Naive thymus-derived CD4-positive, alpha-beta T cell (primary cell): ENCODE measurements at regions of chrX and their contacts with region 1.

Region 1: GRCh38 chrX:40468033-40468846 is 112.5 kb upstream of the ATP6AP2 start:
- DNase-seq: peak in 5 of 9 donors; percentile 22 to 40 (median 31)
- ATAC-seq: peak; percentile 72
- H3K4me3 ChIP-seq: no peak overlapping the region
- H3K4me3 Mint-ChIP-seq: peak overlapping the region in 6 of 10 donors; percentile 8 to 73 (median 38)
- H3K27ac ChIP-seq: no peak overlapping the region
- H3K27ac Mint-ChIP-seq: peak overlapping the region in 2 of 9 donors; percentile 14 to 69
- H3K4me1 ChIP-seq: peaks cover 0 to 13% of the 10 kb centered on the region in 2 donors
- H3K4me1 Mint-ChIP-seq: peaks cover 14 to 40% (median 33%) of the 10 kb centered on the region in 7 donors
- H3K27me3 ChIP-seq: no peaks in the 10 kb centered on the region
- H3K27me3 Mint-ChIP-seq: no peaks in the 10 kb centered on the region

Region 2: GRCh38 chrX:40006106-40007017 is 461.9 kb before region 1 on chrX:
- CTCF ChIA-PET with region 1: no interaction called
- POLR2A ChIA-PET with region 1: no interaction called
- intact Hi-C with region 1: loop called in 1 of 2 experiments (anchors 1 kb)
- DNase-seq: peak in 3 of 9 donors; percentile 13 to 53 (median 23)
- ATAC-seq: peak; percentile 49
- H3K4me3 ChIP-seq: peak overlapping the region; percentile 24
- H3K4me3 Mint-ChIP-seq: peak overlapping the region; percentile 42 to 90 (median 60)
- H3K27ac ChIP-seq: no peak overlapping the region
- H3K27ac Mint-ChIP-seq: no peak overlapping the region
- H3K4me1 ChIP-seq: peaks cover 0 to 14% of the 10 kb centered on the region in 2 donors
- H3K4me1 Mint-ChIP-seq: peaks cover 5 to 35% (median 27%) of the 10 kb centered on the region in 7 donors
- H3K27me3 ChIP-seq: no peaks in the 10 kb centered on the region
- H3K27me3 Mint-ChIP-seq: peaks cover 15 to 51% (median 18%) of the 10 kb centered on the region in 5 donors

Region 3: GRCh38 chrX:40446921-40447320 is 21.3 kb before region 1 on chrX:
- CTCF ChIA-PET with region 1: no interaction called
- POLR2A ChIA-PET with region 1: no interaction called
- intact Hi-C with region 1: loop called in 1 of 2 experiments (anchors 1 kb)
- DNase-seq: no peak
- ATAC-seq: no peak
- H3K4me3 ChIP-seq: no peak overlapping the region
- H3K4me3 Mint-ChIP-seq: no peak overlapping the region
- H3K27ac ChIP-seq: no peak overlapping the region
- H3K27ac Mint-ChIP-seq: no peak overlapping the region
- H3K4me1 ChIP-seq: no peaks in the 10 kb centered on the region
- H3K4me1 Mint-ChIP-seq: peaks cover 0 to 2% (median 0%) of the 10 kb centered on the region in 7 donors
- H3K27me3 ChIP-seq: no peaks in the 10 kb centered on the region
- H3K27me3 Mint-ChIP-seq: peaks cover 0 to 6% (median 0%) of the 10 kb centered on the region in 5 donors

Region 4: GRCh38 chrX:40607381-40607780 is 139.1 kb after region 1 on chrX:
- CTCF ChIA-PET with region 1: no interaction called
- POLR2A ChIA-PET with region 1: no interaction called
- intact Hi-C with region 1: no loop called
- DNase-seq: no peak
- ATAC-seq: no peak
- H3K4me3 ChIP-seq: no peak overlapping the region
- H3K4me3 Mint-ChIP-seq: no peak overlapping the region
- H3K27ac ChIP-seq: no peak overlapping the region
- H3K27ac Mint-ChIP-seq: no peak overlapping the region
- H3K4me1 ChIP-seq: no peaks in the 10 kb centered on the region
- H3K4me1 Mint-ChIP-seq: peaks cover 0 to 2% (median 0%) of the 10 kb centered on the region in 7 donors
- H3K27me3 ChIP-seq: no peaks in the 10 kb centered on the region
- H3K27me3 Mint-ChIP-seq: no peaks in the 10 kb centered on the region

Region 5: GRCh38 chrX:40637687-40638086 is 169.4 kb after region 1 on chrX:
- CTCF ChIA-PET with region 1: no interaction called
- POLR2A ChIA-PET with region 1: no interaction called
- intact Hi-C with region 1: no loop called
- DNase-seq: no peak
- ATAC-seq: no peak
- H3K4me3 ChIP-seq: no peak overlapping the region
- H3K4me3 Mint-ChIP-seq: no peak overlapping the region
- H3K27ac ChIP-seq: no peak overlapping the region
- H3K27ac Mint-ChIP-seq: no peak overlapping the region
- H3K4me1 ChIP-seq: no peaks in the 10 kb centered on the region
- H3K4me1 Mint-ChIP-seq: peaks cover 18 to 45% (median 31%) of the 10 kb centered on the region in 7 donors
- H3K27me3 ChIP-seq: no peaks in the 10 kb centered on the region
- H3K27me3 Mint-ChIP-seq: no peaks in the 10 kb centered on the region